GM12878 (cell line): ENCODE measurements at regions of chr20 and their contacts with region 1.

Region 1: GRCh38 chr20:63707549-63708300 is at the starts of genes ARFRP1 and ZGPAT:
- DNase-seq: no peak
- ATAC-seq: peak; percentile 93
- H3K4me3 ChIP-seq: peak within 1 kb of the TSS; percentile 89
- H3K27ac ChIP-seq: peak within 1 kb of the TSS; percentile 74
- H3K4me1 ChIP-seq: peaks cover 12% of the 10 kb centered on the region
- H3K27me3 ChIP-seq: no peaks in the 10 kb centered on the region
- CTCF ChIP-seq: peak in 1 of 3 experiments; percentile 2; a peak in 1 of 6 replicates
- EP300 ChIP-seq: no peak
- POLR2A ChIP-seq: peak; percentile 83
- RAD21 ChIP-seq: 0 out of 2 replicates have a peak, but pooled peaks have one; percentile 19
- polyA plus RNA-seq, gene ARFRP1: 0.37 to 3.5 TPM
- polyA plus RNA-seq, gene ZGPAT: 0.58 to 0.79 TPM

Region 2: DNA sequence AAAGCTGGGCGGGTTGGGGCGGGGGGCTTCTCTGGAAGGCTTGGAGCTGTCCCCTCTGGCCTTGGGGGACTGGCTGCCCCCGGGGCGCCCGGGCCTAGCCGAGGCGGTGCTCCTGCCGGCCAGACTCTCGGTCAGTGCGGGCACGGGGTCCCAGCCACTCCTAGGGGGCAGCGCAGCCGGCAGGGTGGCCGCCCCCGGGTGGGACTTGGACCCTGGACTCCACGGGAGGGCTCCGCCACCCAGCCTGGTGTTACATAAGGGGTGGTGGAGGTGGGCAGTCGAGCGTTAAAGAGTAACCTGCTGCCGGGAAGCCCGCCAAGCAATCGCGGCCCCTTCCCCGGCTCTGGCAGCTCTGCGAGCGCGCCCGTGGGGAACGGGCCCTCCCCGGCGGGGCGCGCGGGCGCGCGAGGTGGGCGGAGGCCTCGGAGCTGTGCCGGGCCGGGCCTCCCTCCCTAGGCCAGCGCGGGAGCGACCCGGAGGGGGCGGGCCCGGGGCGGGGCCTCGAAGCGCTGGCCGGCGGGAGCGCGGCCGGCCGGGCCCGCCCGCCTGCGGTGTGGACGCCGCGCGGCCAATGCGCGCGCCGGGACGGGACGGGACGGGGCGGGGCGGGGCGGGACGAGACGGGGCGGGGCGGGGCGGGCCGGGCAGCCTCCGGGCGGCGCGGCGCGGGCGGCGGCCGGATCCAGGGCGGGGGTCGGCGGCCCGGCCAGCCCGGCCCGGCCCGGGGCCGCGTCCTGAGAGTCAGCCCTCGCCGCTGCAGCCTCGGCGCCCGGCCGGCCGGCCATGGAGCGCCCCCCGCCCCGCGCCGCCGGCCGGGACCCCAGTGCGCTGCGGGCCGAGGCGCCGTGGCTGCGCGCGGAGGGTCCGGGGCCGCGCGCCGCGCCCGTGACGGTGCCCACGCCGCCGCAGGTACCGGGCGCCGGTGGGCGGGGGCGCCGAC is 31.7 kb after region 1 on chr20 and contains the start of gene SLC2A4RG:
- CTCF ChIA-PET with region 1: interaction called, 28 read pairs
- POLR2A ChIA-PET with region 1: interaction called, 6 read pairs
- RAD21 ChIA-PET with region 1: interaction called, 32 read pairs
- SMC1A ChIA-PET with region 1: interaction called, 14 read pairs
- in situ Hi-C with region 1: no loop called
- intact Hi-C with region 1: loop called (anchors 2 kb)
- DNase-seq: no peak
- ATAC-seq: peak; percentile 55
- H3K4me3 ChIP-seq: peak within 1 kb of the TSS; percentile 84
- H3K27ac ChIP-seq: peak within 1 kb of the TSS; percentile 72
- H3K4me1 ChIP-seq: peaks cover 33% of the 10 kb centered on the region
- H3K27me3 ChIP-seq: no peaks in the 10 kb centered on the region
- CTCF ChIP-seq: no peak
- EP300 ChIP-seq: no peak
- POLR2A ChIP-seq: no peak
- RAD21 ChIP-seq: no peak
- polyA plus RNA-seq, gene SLC2A4RG: 0.34 to 2.8 TPM

Region 3: GRCh38 chr20:63785691-63786131 is 78.0 kb after region 1 on chr20:
- CTCF ChIA-PET with region 1: interaction called, 11 read pairs
- POLR2A ChIA-PET with region 1: no interaction called
- RAD21 ChIA-PET with region 1: interaction called, 3 read pairs
- SMC1A ChIA-PET with region 1: interaction called, 4 read pairs
- in situ Hi-C with region 1: no loop called
- intact Hi-C with region 1: loop called (anchors 2 kb)
- DNase-seq: no peak
- ATAC-seq: no peak
- H3K4me3 ChIP-seq: no peak overlapping the region
- H3K27ac ChIP-seq: no peak overlapping the region
- H3K4me1 ChIP-seq: peaks cover 8% of the 10 kb centered on the region
- H3K27me3 ChIP-seq: no peaks in the 10 kb centered on the region
- CTCF ChIP-seq: no peak
- EP300 ChIP-seq: no peak
- POLR2A ChIP-seq: no peak
- RAD21 ChIP-seq: no peak

Region 4: GRCh38 chr20:63835021-63835858 is 127.5 kb after region 1 on chr20:
- CTCF ChIA-PET with region 1: no interaction called
- POLR2A ChIA-PET with region 1: no interaction called
- RAD21 ChIA-PET with region 1: no interaction called
- SMC1A ChIA-PET with region 1: no interaction called
- in situ Hi-C with region 1: no loop called
- intact Hi-C with region 1: no loop called
- DNase-seq: no peak
- ATAC-seq: peak; percentile 83
- H3K4me3 ChIP-seq: no peak overlapping the region
- H3K27ac ChIP-seq: no peak overlapping the region
- H3K4me1 ChIP-seq: no peaks in the 10 kb centered on the region
- H3K27me3 ChIP-seq: no peaks in the 10 kb centered on the region; a peak in 1 of 4 replicates
- CTCF ChIP-seq: no peak
- EP300 ChIP-seq: no peak
- POLR2A ChIP-seq: no peak
- RAD21 ChIP-seq: no peak

Region 5: GRCh38 chr20:63858393-63859165 is 150.9 kb after region 1 on chr20:
- CTCF ChIA-PET with region 1: interaction called, 26 read pairs
- POLR2A ChIA-PET with region 1: no interaction called
- RAD21 ChIA-PET with region 1: interaction called, 6 read pairs
- SMC1A ChIA-PET with region 1: interaction called, 5 read pairs
- in situ Hi-C with region 1: loop called (anchors 5 kb)
- intact Hi-C with region 1: no loop called
- DNase-seq: no peak
- ATAC-seq: peak; percentile 3
- H3K4me3 ChIP-seq: no peak overlapping the region
- H3K27ac ChIP-seq: no peak overlapping the region
- H3K4me1 ChIP-seq: peaks cover 36% of the 10 kb centered on the region
- H3K27me3 ChIP-seq: no peaks in the 10 kb centered on the region
- CTCF ChIP-seq: peak in 1 of 3 experiments; percentile 20; a peak in 2 of 6 replicates
- EP300 ChIP-seq: no peak
- POLR2A ChIP-seq: peak; percentile 51
- RAD21 ChIP-seq: no peak

Region 6: GRCh38 chr20:63864847-63865640 is 157.3 kb after region 1 on chr20 and contains the start of gene TPD52L2:
- CTCF ChIA-PET with region 1: interaction called, 26 read pairs
- POLR2A ChIA-PET with region 1: interaction called, 4 read pairs
- RAD21 ChIA-PET with region 1: interaction called, 15 read pairs
- SMC1A ChIA-PET with region 1: interaction called, 6 read pairs
- in situ Hi-C with region 1: no loop called
- intact Hi-C with region 1: loop called (anchors 2 kb)
- DNase-seq: peak; percentile 94
- ATAC-seq: peak; percentile 91
- H3K4me3 ChIP-seq: peak within 1 kb of the TSS; percentile 96
- H3K27ac ChIP-seq: peak within 1 kb of the TSS; percentile 90
- H3K4me1 ChIP-seq: peaks cover 7% of the 10 kb centered on the region
- H3K27me3 ChIP-seq: no peaks in the 10 kb centered on the region
- CTCF ChIP-seq: no peak
- EP300 ChIP-seq: 0 out of 4 replicates have a peak, but pooled peaks of 1 of the 2 experiments have one; percentile 19
- POLR2A ChIP-seq: peak; percentile 96
- RAD21 ChIP-seq: no peak
- polyA plus RNA-seq, gene TPD52L2: 1.6 to 4.1 TPM

Region 7: DNA sequence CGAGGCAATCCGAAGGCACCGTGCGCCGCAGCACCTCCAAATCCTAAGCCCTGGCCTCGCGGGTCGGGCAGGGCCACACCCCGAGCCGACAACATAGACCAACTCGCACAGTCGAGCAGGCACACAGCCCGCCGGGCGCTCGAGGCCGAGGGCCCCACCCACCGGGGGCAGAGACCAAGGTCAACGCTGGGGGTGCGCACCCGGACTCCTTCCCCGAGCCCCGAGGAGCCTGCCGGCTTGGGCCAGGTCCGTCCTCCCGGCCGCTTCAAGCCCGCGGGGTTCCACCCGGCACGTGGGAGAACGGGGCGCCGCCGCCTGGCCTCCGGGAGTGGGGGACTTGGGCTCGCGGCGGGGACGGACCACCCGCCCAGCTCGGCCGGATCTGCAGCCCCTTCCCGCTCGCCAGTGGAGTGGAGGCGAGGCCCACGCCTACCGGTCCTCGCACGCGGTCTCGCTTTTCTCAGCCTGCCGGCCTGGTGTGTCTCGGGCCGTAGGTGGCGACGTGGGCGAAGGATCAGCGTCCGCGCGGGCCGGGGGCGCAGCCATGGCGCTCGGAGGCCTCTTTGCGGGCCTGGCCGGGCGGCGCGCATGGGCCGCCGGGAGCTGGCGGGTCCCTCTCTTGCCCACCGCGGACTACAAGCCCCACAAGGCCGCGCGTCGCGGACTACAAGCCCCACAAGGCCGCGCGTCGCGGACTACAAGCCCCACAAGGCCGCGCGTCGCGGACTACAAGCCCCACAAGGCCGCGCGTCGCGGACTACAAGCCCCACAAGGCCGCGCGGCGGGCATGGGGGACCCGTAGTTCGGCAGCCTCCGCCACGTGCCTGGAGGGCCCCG is 248.3 kb after region 1 on chr20 and contains the start of gene UCKL1:
- CTCF ChIA-PET with region 1: interaction called, 4 read pairs
- POLR2A ChIA-PET with region 1: no interaction called
- RAD21 ChIA-PET with region 1: no interaction called
- SMC1A ChIA-PET with region 1: interaction called, 3 read pairs
- in situ Hi-C with region 1: no loop called
- intact Hi-C with region 1: loop called (anchors 2 kb)
- DNase-seq: no peak
- ATAC-seq: peak; percentile 87
- H3K4me3 ChIP-seq: peak within 1 kb of the TSS; percentile 81
- H3K27ac ChIP-seq: peak within 1 kb of the TSS; percentile 83
- H3K4me1 ChIP-seq: peaks cover 10% of the 10 kb centered on the region
- H3K27me3 ChIP-seq: no peaks in the 10 kb centered on the region
- CTCF ChIP-seq: no peak; a peak in 1 of 6 replicates
- EP300 ChIP-seq: no peak
- POLR2A ChIP-seq: peak; percentile 91
- RAD21 ChIP-seq: no peak
- polyA plus RNA-seq, gene UCKL1: 2.4 to 7.9 TPM